T-cell (primary cell): ENCODE measurements at regions of chr2 and their contacts with region 1.

Region 1: DNA sequence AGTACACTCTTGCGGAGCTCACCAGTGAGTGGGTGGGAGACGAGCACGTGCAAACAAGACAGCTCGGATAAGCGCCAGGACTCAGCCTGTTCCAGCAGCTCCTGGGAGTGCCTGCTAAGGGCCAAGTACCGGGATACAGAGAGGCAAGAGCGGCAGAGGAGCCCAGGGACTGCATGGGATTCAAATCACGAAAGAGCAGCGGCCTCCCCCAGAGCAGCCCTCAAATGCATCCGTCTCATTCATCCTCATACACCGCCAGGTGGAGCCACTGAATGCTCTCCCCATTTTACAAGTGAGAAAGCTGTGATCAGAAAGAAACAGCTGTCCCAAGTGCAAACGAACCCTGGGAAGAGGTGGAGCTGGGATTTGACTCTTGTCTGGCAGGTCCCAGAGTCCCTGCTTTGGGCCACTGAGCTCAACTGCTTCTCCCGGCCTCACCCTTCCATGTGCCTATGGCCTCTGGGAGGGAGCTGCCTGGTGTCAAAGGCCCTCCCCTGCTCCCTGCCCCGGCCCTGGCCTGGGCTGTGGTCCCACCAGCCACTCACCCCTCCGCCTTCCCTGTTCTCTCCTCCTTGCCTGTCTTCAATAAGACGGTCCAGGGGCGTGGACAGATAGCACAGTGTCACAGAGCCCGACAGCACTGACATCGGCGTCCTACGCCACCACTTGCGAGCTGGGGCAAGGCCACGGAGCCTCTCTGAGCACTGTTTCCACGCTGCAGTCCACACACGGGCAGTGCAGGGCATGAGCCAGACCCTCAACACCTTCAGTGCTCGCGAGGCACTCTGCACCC is 72.8 kb upstream of the TAF1B start:
- DNase-seq: peak in 23 of 35 experiments; percentile 23 to 72 (median 43)
- ATAC-seq: peak; percentile 43 to 71 (median 67)
- H3K4me3 ChIP-seq: no peak overlapping the region
- H3K4me3 Mint-ChIP-seq: no peak overlapping the region
- H3K27ac ChIP-seq: no peak overlapping the region
- H3K27ac Mint-ChIP-seq: no peak overlapping the region
- H3K4me1 ChIP-seq: peaks cover 0 to 24% of the 10 kb centered on the region in 2 experiments
- H3K4me1 Mint-ChIP-seq: peaks cover 0 to 21% (median 9%) of the 10 kb centered on the region in 3 donors
- H3K27me3 ChIP-seq: peaks cover 0 to 27% of the 10 kb centered on the region in 2 experiments
- H3K27me3 Mint-ChIP-seq: peaks cover 0 to 1% of the 10 kb centered on the region in 2 donors

Region 2: DNA sequence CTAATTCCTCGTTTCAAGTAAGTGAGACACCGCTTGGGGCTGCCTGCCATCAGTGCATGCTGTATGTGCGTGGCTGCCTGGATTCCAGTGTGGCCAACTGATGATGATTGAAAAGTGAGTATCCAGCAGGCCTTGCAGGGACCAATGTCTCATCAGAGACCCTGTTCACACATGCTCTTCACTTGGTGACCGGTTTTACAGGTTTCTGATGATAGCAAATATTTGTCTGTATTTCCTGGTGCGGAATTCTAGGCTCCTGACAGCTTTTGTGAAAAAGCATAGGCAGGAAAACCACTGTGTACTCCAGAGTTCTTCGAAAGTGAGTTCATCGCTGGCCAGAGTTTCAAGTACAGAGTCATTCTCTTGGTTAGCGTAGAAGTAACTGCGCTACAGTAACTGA is 125.9 kb before region 1 on chr2:
- CTCF ChIA-PET with region 1: no interaction called
- POLR2A ChIA-PET with region 1: no interaction called
- DNase-seq: no peak
- ATAC-seq: no peak
- H3K4me3 ChIP-seq: no peak overlapping the region
- H3K4me3 Mint-ChIP-seq: no peak overlapping the region
- H3K27ac ChIP-seq: no peak overlapping the region
- H3K27ac Mint-ChIP-seq: no peak overlapping the region
- H3K4me1 ChIP-seq: peaks cover 0 to 15% of the 10 kb centered on the region in 2 experiments
- H3K4me1 Mint-ChIP-seq: peaks cover 6 to 16% (median 10%) of the 10 kb centered on the region in 3 donors
- H3K27me3 ChIP-seq: peaks cover 0 to 7% of the 10 kb centered on the region in 2 experiments
- H3K27me3 Mint-ChIP-seq: peaks cover 0 to 4% of the 10 kb centered on the region in 2 donors

Region 3: DNA sequence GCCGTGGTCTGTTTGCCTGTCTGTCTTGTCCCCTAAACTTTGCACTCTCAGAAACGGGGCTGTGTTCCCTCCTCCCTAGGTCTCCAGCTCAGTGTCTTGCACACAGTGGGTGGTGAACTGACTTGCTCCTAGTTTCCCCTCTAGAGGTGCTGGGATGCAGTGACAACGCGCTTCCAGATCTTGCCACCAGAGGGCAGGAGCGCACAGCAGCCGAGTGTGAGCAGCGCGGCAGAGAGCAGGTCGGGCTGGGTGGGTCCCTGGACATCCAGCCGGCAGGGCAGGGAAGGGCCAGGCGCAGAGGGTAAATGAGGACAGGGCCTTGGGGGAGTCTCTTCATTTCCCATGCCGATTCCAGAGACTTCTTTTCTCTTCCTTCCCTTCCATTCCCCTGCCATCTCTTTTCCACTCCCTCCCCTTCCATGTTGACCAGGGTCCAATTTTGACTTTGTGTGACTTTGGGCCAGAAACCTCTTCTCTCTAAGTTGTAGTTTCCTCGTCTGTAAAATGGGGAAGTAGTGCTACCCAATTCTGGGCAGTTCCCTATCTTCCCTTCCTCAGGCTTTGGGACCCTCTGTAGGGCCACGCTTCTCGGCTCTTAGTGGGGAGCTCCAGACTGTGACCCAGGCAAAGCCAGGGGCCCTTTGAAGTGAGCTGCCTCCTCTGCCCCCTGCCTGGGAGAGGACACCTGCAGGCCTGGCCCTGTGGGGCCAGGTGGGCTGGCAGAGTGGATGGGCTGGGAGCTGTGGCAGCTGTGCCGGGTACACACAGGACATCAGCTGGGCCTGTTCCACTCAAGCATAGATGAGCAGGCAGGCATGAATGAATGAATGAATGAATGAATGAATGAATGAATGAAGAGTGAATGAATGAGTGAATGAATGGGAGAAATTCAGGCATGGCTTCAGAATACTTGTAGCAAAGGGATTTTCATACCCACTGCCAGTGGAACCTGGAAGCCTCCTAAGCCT is 29.4 kb after region 1 on chr2:
- CTCF ChIA-PET with region 1: interaction called, 5 to 11 read pairs
- POLR2A ChIA-PET with region 1: no interaction called
- DNase-seq: peak; percentile 50 to 91 (median 76)
- ATAC-seq: peak; percentile 85 to 92 (median 88)
- H3K4me3 ChIP-seq: peak overlapping the region; percentile 26 to 40
- H3K4me3 Mint-ChIP-seq: peak overlapping the region; percentile 47 to 77 (median 47)
- H3K27ac ChIP-seq: peak overlapping the region; percentile 86
- H3K27ac Mint-ChIP-seq: peak overlapping the region; percentile 30 to 87
- H3K4me1 ChIP-seq: peaks cover 6 to 48% of the 10 kb centered on the region in 2 experiments
- H3K4me1 Mint-ChIP-seq: peaks cover 17 to 40% (median 25%) of the 10 kb centered on the region in 3 donors
- H3K27me3 ChIP-seq: peaks cover 0 to 8% of the 10 kb centered on the region in 2 experiments
- H3K27me3 Mint-ChIP-seq: peaks cover 0 to 1% of the 10 kb centered on the region in 2 donors